ENCODE measurements at regions of chr16 and their contacts with region 1.

Region 1: DNA sequence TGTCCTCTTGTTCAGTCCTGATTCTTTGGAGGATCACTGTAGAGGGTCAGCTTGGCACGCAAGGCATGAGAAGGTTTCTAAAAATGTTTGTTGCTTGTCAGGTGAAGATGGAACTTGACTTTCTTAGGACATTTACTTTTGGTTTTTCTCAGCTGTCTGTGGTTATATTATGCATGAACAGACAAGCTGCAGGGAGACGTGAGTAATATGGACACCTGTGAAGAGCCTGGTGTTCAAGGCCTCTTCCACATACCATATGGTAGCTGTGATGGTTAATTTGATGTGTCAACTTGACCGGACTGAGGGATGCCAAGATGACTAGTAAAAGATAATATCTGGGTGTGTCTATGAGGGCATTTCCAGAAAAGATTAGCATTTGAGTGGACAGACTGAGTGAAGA is 270.2 kb upstream of the CPHXL start:
- DNase-seq: no peak
- H3K4me3 ChIP-seq: no peak overlapping the region
- H3K27ac ChIP-seq: no peak overlapping the region
- H3K4me1 ChIP-seq: no peaks in the 10 kb centered on the region
- H3K27me3 ChIP-seq: no peaks in the 10 kb centered on the region
- CTCF ChIP-seq: no peak
- POLR2A ChIP-seq: no peak

Region 2: DNA sequence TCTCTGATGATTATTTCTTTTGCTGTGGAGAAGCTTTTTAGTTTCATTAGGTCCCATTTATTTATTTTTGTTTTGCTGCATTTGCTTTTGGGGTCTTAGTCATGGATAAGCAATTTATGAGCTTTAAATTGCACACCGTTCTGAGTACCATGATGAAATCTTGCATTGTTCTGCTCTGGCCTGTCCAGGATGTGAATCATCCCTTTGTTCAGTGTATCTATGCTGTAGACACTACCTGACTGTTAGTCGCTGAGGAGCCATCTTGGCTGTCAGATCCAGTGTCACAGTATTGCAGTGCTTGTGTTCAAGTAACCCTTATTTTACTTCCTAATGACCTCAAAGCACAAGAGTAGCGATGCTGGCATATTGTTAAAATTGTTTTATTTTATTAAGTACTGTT is 62.7 kb after region 1 on chr16:
- intact Hi-C with region 1: loop called in 1 of 2 experiments (anchors 10 kb)
- DNase-seq: no peak
- H3K4me3 ChIP-seq: no peak overlapping the region
- H3K27ac ChIP-seq: no peak overlapping the region
- H3K4me1 ChIP-seq: no peaks in the 10 kb centered on the region
- H3K27me3 ChIP-seq: no peaks in the 10 kb centered on the region
- CTCF ChIP-seq: no peak
- POLR2A ChIP-seq: no peak

Measured in adrenal gland (tissue), 19 donors.